Mucosa of descending colon (tissue), 3 donors: ENCODE measurements at regions of chr6 and their contacts with region 1.

Region 1: GRCh38 chr6:88238065-88238464 is 71.9 kb upstream of the CNR1 start:
- DNase-seq: peak in 1 of 3 donors; percentile 45
- ATAC-seq: peak; percentile 64
- H3K4me3 ChIP-seq: no peak overlapping the region
- H3K4me1 ChIP-seq: no peaks in the 10 kb centered on the region
- CTCF ChIP-seq: no peak

Region 2: GRCh38 chr6:87944541-87944954 is 293.5 kb before region 1 on chr6:
- intact Hi-C with region 1: loop called in 1 of 2 experiments (anchors 10 kb)
- DNase-seq: peak; percentile 30 to 54 (median 37)
- ATAC-seq: peak; percentile 51
- H3K4me3 ChIP-seq: no peak overlapping the region
- H3K4me1 ChIP-seq: no peaks in the 10 kb centered on the region
- CTCF ChIP-seq: no peak